ENCODE measurements at regions of chr18 and their contacts with region 1.

Region 1: DNA sequence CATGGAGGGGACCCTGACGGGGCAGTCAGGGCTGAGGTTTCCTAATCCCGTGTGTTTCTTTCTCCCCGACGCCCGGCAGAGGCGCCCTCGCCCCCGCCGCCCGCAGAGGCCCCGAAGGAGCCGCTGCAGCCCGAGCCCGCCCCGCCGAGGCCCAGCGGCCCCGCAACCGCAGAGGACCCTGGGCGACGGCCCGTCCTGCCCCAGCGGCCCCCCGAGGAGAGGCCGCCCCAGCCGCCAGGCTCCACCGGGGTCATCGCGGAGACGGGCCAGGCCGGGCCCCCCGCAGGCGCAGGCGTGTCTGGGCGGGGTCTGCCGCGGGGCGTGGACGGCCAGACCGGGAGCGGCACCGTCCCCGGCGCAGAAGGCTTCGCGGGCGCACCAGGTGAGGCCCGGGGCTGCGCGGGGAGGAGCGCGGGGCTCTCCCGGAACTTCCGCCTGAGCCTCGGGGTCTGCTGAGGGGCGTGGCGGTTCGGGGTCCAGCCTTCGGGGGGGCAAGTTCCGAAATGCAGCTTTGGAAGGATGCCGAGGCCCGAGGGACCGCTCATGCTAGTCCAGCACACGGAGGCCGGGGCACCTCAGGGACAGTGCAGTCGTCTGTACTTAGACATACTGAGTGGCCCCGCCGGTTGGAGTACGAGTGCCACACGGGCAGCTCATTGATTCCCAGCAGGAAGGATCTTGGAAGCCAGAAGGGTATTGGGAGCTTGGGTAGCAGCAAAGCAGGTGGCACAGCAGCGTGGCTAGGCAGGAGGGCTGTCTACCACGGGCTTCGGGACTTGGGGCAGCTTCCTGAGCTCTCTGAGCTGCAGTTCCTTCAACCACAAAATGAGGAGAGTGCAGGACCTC is 60.1 kb downstream of the EMILIN2 start:
- DNase-seq: peak; percentile 53
- H3K4me3 Mint-ChIP-seq: peak overlapping the region; percentile 80
- H3K27ac Mint-ChIP-seq: peak overlapping the region; percentile 59
- H3K4me1 Mint-ChIP-seq: peaks cover 32% of the 10 kb centered on the region
- H3K27me3 Mint-ChIP-seq: no peaks in the 10 kb centered on the region

Region 2: GRCh38 chr18:2805970-2806943 is 100.7 kb before region 1 on chr18:
- CTCF ChIA-PET with region 1: no interaction called
- POLR2A ChIA-PET with region 1: no interaction called
- DNase-seq: no peak
- H3K4me3 Mint-ChIP-seq: no peak overlapping the region
- H3K27ac Mint-ChIP-seq: no peak overlapping the region
- H3K4me1 Mint-ChIP-seq: no peaks in the 10 kb centered on the region
- H3K27me3 Mint-ChIP-seq: no peaks in the 10 kb centered on the region

Region 3: GRCh38 chr18:2889761-2890192 is 17.1 kb before region 1 on chr18:
- CTCF ChIA-PET with region 1: interaction called, 4 read pairs
- POLR2A ChIA-PET with region 1: interaction called, 23 read pairs
- DNase-seq: peak; percentile 37
- H3K4me3 Mint-ChIP-seq: no peak overlapping the region
- H3K27ac Mint-ChIP-seq: peak overlapping the region; percentile 85
- H3K4me1 Mint-ChIP-seq: peaks cover 50% of the 10 kb centered on the region
- H3K27me3 Mint-ChIP-seq: no peaks in the 10 kb centered on the region

Region 4: GRCh38 chr18:3060667-3061580 is 154.0 kb after region 1 on chr18:
- CTCF ChIA-PET with region 1: no interaction called
- POLR2A ChIA-PET with region 1: no interaction called
- DNase-seq: peak; percentile 64
- H3K4me3 Mint-ChIP-seq: peak overlapping the region; percentile 72
- H3K27ac Mint-ChIP-seq: peak overlapping the region; percentile 91
- H3K4me1 Mint-ChIP-seq: peaks cover 67% of the 10 kb centered on the region
- H3K27me3 Mint-ChIP-seq: no peaks in the 10 kb centered on the region

Region 5: GRCh38 chr18:3074087-3074486 is 167.2 kb after region 1 on chr18:
- CTCF ChIA-PET with region 1: no interaction called
- POLR2A ChIA-PET with region 1: no interaction called
- DNase-seq: no peak
- H3K4me3 Mint-ChIP-seq: no peak overlapping the region
- H3K27ac Mint-ChIP-seq: no peak overlapping the region
- H3K4me1 Mint-ChIP-seq: peaks cover 3% of the 10 kb centered on the region
- H3K27me3 Mint-ChIP-seq: no peaks in the 10 kb centered on the region

Region 6: GRCh38 chr18:3104190-3105054 is 197.5 kb after region 1 on chr18:
- CTCF ChIA-PET with region 1: no interaction called
- POLR2A ChIA-PET with region 1: no interaction called
- DNase-seq: no peak
- H3K4me3 Mint-ChIP-seq: no peak overlapping the region
- H3K27ac Mint-ChIP-seq: no peak overlapping the region
- H3K4me1 Mint-ChIP-seq: no peaks in the 10 kb centered on the region
- H3K27me3 Mint-ChIP-seq: no peaks in the 10 kb centered on the region